Activated naive CD4-positive, alpha-beta T cell treated with anti-CD3 and anti-CD28 coated beads for 36 hours (primary cell): ENCODE measurements at regions of chr1 and their contacts with region 1.

Region 1: DNA sequence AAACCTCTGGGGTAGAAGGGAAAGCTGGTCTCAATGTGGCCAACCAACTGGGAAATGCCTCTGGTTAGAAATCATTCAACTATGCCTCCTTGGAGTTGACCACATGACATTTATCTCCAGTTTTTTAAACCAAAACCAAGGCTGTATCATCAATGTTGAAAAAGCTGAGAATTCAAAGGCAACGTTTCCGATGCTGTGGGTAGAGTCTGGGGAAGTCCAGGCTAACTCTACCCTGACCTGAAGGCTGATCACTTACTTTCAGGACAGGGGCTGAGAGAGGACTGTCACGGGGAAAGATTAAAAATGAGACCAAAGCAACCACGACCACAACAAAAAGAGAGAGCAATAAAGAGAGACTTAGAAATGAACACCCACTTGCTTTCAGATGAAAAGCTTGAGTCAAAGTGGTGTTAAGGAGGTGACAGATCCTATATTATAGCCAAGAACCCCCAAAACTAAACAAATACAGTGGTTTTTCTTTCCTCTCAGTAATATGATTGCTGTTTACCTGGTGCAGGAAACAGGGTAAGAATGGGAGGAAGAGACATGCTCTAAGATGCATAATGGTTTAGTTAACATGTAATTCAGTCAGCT is 90.8 kb upstream of the TNFSF4 start:
- DNase-seq: peak; percentile 76
- H3K4me3 Mint-ChIP-seq: no peak overlapping the region
- H3K27ac Mint-ChIP-seq: peak overlapping the region; percentile 2
- H3K4me1 Mint-ChIP-seq: peaks cover 41% of the 10 kb centered on the region
- H3K27me3 Mint-ChIP-seq: no peaks in the 10 kb centered on the region

Region 2: DNA sequence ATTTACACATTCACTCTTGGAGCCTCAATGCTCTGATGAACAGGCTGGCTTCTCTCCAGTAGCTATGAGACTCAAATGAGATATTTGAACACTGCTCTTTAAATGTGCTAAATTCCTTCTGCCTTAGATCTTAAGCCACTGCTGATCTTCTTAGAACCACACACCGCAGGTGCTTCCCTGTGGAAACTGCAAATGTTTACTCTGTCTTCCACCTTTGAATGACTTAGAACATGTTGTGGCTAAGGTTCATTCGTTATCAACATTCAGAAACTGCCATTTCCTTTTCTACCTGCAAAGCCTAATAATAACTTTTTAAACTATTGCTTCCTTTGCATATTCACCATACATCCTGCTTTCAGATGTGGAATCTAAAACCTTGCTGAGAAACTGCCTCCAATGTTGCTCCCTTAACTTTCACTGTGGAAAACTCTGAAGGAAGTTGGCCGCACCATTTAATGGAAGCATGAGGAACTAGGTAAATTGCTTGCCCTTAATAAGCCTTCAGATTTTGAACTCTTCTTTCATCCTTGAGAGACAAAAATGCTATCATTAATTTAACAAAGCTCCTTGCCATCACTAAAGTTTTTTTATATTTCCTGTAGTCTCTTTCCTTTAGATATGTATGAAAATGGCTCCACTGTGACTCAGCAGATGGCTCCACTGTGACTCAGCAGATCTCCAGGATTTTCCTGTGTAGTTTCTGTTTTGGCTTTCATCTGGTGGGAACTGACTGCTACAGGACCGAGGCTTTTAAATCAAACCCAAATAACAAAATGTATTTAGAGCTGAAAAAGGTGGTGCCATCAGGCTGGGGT is 390.9 kb before region 1 on chr1:
- CTCF ChIA-PET with region 1: no interaction called
- intact Hi-C with region 1: loop called (anchors 2 kb)
- DNase-seq: peak; percentile 46
- H3K4me3 Mint-ChIP-seq: no peak overlapping the region
- H3K27ac Mint-ChIP-seq: no peak overlapping the region
- H3K4me1 Mint-ChIP-seq: peaks cover 19% of the 10 kb centered on the region
- H3K27me3 Mint-ChIP-seq: no peaks in the 10 kb centered on the region

Region 3: GRCh38 chr1:173330149-173330951 is 32.5 kb after region 1 on chr1:
- CTCF ChIA-PET with region 1: no interaction called
- intact Hi-C with region 1: loop called (anchors 1 kb)
- DNase-seq: no peak
- H3K4me3 Mint-ChIP-seq: no peak overlapping the region
- H3K27ac Mint-ChIP-seq: no peak overlapping the region
- H3K4me1 Mint-ChIP-seq: peaks cover 25% of the 10 kb centered on the region
- H3K27me3 Mint-ChIP-seq: no peaks in the 10 kb centered on the region

Region 4: GRCh38 chr1:173392895-173393658 is 95.2 kb after region 1 on chr1:
- CTCF ChIA-PET with region 1: no interaction called
- intact Hi-C with region 1: no loop called
- DNase-seq: no peak
- H3K4me3 Mint-ChIP-seq: no peak overlapping the region
- H3K27ac Mint-ChIP-seq: no peak overlapping the region
- H3K4me1 Mint-ChIP-seq: no peaks in the 10 kb centered on the region
- H3K27me3 Mint-ChIP-seq: no peaks in the 10 kb centered on the region